HepG2 (cell line): ENCODE measurements at regions of chr1 and their contacts with region 1.

Region 1: GRCh38 chr1:44213222-44214112 is at the start of gene DMAP1:
- DNase-seq: peak; percentile 71
- ATAC-seq: peak; percentile 84
- H3K4me3 ChIP-seq: peak within 1 kb of the TSS; percentile 80 to 90 (median 83)
- H3K27ac ChIP-seq: peak within 1 kb of the TSS; percentile 20
- H3K4me1 ChIP-seq: peaks cover 36% of the 10 kb centered on the region
- H3K27me3 ChIP-seq: no peaks in the 10 kb centered on the region; a peak in 1 of 5 replicates
- CTCF ChIP-seq: peak; percentile 59
- EP300 ChIP-seq: peak; percentile 33 to 41; a peak in 2 of 4 replicates
- POLR2A ChIP-seq: peak; percentile 55 to 81
- RAD21 ChIP-seq: peak; percentile 70
- total RNA-seq, gene DMAP1: 17.5 and 17.6 TPM in 2 replicates

Region 2: GRCh38 chr1:44294588-44295007 is 81.1 kb after region 1 on chr1:
- CTCF ChIA-PET with region 1: interaction called, 21 read pairs
- POLR2A ChIA-PET with region 1: interaction called, 9 read pairs
- in situ Hi-C with region 1: loop called (anchors 5 kb)
- intact Hi-C with region 1: loop called (anchors 1 kb)
- DNase-seq: peak; percentile 31
- ATAC-seq: peak; percentile 75
- H3K4me3 ChIP-seq: no peak overlapping the region
- H3K27ac ChIP-seq: no peak overlapping the region
- H3K4me1 ChIP-seq: peaks cover 40% of the 10 kb centered on the region
- H3K27me3 ChIP-seq: no peaks in the 10 kb centered on the region
- CTCF ChIP-seq: peak; percentile 72
- EP300 ChIP-seq: no peak
- POLR2A ChIP-seq: no peak
- RAD21 ChIP-seq: peak; percentile 70

Region 3: GRCh38 chr1:44318097-44319088 is 104.9 kb after region 1 on chr1:
- CTCF ChIA-PET with region 1: interaction called, 31 read pairs
- POLR2A ChIA-PET with region 1: no interaction called
- in situ Hi-C with region 1: no loop called
- intact Hi-C with region 1: loop called (anchors 1 kb)
- DNase-seq: peak; percentile 34
- ATAC-seq: peak; percentile 54; the same call in 2 of the 3 replicates
- H3K4me3 ChIP-seq: no peak overlapping the region
- H3K27ac ChIP-seq: no peak overlapping the region
- H3K4me1 ChIP-seq: no peaks in the 10 kb centered on the region
- H3K27me3 ChIP-seq: no peaks in the 10 kb centered on the region
- CTCF ChIP-seq: peak; percentile 78
- EP300 ChIP-seq: no peak
- POLR2A ChIP-seq: no peak
- RAD21 ChIP-seq: peak; percentile 34; the same call in 1 of the 2 replicates

Region 4: DNA sequence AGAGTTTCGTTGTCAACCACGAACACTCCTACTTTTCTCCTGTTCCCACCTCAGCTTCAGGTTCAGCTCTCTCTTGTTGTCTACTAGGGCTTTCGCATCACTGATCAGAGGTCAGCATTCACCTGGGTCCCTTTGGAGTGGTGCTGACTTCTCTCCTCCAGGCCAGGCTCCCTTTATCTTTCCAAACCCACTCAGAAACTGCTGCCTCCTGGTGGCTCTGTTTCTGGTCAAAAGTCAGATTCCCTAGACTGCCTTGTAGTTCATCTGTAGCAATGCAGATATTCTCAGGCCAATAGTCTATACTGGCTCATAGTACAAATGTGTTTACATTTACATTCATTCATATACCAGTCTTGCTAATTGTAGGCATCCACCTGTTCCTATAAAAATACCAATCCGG is 148.0 kb after region 1 on chr1:
- CTCF ChIA-PET with region 1: interaction called, 4 read pairs
- POLR2A ChIA-PET with region 1: no interaction called
- in situ Hi-C with region 1: no loop called
- intact Hi-C with region 1: loop called (anchors 1 kb)
- DNase-seq: no peak
- ATAC-seq: peak; percentile 79
- H3K4me3 ChIP-seq: no peak overlapping the region
- H3K27ac ChIP-seq: no peak overlapping the region
- H3K4me1 ChIP-seq: peaks cover 1% of the 10 kb centered on the region; the same call in 1 of the 2 replicates
- H3K27me3 ChIP-seq: peaks cover 2 to 27% of the 10 kb centered on the region in 2 experiments; a peak in 3 of 5 replicates
- CTCF ChIP-seq: peak; percentile 55
- EP300 ChIP-seq: no peak
- POLR2A ChIP-seq: no peak
- RAD21 ChIP-seq: 0 out of 2 replicates have a peak, but pooled peaks have one; percentile 14

Region 5: GRCh38 chr1:44594871-44595746 is 381.6 kb after region 1 on chr1:
- CTCF ChIA-PET with region 1: interaction called, 7 read pairs
- POLR2A ChIA-PET with region 1: no interaction called
- in situ Hi-C with region 1: loop called (anchors 25 kb)
- intact Hi-C with region 1: loop called (anchors 2 kb)
- DNase-seq: peak; percentile 43
- ATAC-seq: peak; percentile 97
- H3K4me3 ChIP-seq: no peak overlapping the region
- H3K27ac ChIP-seq: no peak overlapping the region
- H3K4me1 ChIP-seq: peaks cover 7% of the 10 kb centered on the region; the same call in 1 of the 2 replicates
- H3K27me3 ChIP-seq: 0 out of 5 replicates have a peak, but pooled peaks cover 0 to 4% of the 10 kb centered on the region in 2 experiments
- CTCF ChIP-seq: peak; percentile 98
- EP300 ChIP-seq: no peak
- POLR2A ChIP-seq: no peak
- RAD21 ChIP-seq: peak; percentile 92